Posterior cingulate gyrus (tissue), 11 donors: ENCODE measurements at regions of chr6 and their contacts with region 1.

Region 1: GRCh38 chr6:75748743-75749501 is at the start of gene MYO6:
- DNase-seq: peak; percentile 59 to 97 (median 78)

Region 2: DNA sequence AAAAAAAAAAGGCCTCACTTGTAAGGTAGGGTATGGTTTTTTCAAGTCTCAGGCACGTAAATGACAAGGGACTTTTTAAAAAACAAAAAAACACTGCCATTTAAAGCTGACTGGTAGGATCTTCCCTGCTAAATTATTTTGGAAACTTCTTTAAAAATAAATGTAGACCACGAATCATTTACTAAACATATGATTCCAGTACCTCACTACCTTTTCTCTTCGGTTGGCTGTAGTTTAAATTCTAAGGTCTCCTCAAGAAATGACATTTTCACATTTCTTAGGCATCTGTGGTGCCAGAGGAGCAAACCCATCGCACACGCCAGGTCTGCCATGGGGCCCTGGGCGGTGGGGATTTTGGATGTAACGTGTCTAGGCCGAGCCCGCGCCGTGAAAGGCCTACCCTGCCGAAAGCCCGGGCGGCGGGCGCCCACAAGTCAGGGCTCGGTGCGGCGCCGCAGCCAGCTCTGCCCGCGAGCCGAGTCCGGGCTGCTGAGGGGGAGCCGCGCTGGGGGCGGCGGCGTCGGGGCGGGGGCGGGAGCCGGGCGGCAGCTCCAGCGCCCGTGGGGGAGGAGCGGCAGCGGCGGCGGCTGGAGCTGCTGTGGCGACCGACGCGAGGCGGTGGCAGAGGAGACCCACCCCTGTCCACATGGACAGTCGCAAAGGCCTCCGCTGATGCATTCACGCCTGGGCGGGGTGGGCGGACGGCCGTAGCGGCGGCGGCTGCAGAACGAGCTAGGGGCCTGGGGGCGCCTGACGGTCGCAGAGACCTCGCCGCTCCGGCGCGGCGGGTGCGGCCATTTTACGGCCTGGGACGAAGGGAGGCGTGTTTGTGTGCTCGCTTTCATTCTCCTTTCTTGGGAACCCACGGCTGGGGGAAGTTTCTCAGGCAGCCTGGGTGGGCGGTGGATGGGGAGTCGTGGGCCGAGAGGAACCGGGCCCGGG is 147.3 kb before region 1 on chr6 and contains the start of gene SENP6:
- intact Hi-C with region 1: loop called (anchors 5 kb)
- DNase-seq: peak; percentile 66 to 97 (median 74)